ENCODE measurements at regions of chr10 and their contacts with region 1.

Region 1: DNA sequence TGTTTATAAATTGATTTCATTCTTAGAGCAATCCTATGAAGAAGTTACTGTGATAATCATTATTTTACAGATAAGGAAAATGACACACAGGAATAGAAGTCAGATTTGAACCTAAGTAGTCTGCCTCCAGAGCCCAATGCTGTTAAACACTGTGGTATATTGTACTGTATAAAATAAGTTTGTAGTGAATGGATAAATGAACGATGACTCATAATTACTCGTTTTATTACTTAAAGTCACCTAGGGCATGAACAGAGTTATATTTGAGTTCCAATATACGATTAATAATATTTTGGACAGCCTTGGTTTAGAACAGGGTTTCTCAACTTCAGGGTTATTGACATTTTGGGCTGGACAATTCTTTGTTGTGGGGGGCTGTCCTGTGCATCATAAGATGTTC is 7.8 kb upstream of the BTRC start:
- DNase-seq: no peak
- H3K4me3 ChIP-seq: no peak overlapping the region
- H3K27ac ChIP-seq: no peak overlapping the region
- H3K4me1 ChIP-seq: no peaks in the 10 kb centered on the region
- H3K27me3 ChIP-seq: no peaks in the 10 kb centered on the region
- CTCF ChIP-seq: no peak

Region 2: GRCh38 chr10:101118626-101119025 is 227.6 kb before region 1 on chr10:
- intact Hi-C with region 1: no loop called
- DNase-seq: no peak
- H3K4me3 ChIP-seq: no peak overlapping the region
- H3K27ac ChIP-seq: no peak overlapping the region
- H3K4me1 ChIP-seq: peaks cover 14% of the 10 kb centered on the region
- H3K27me3 ChIP-seq: peaks cover 20% of the 10 kb centered on the region
- CTCF ChIP-seq: no peak

Region 3: DNA sequence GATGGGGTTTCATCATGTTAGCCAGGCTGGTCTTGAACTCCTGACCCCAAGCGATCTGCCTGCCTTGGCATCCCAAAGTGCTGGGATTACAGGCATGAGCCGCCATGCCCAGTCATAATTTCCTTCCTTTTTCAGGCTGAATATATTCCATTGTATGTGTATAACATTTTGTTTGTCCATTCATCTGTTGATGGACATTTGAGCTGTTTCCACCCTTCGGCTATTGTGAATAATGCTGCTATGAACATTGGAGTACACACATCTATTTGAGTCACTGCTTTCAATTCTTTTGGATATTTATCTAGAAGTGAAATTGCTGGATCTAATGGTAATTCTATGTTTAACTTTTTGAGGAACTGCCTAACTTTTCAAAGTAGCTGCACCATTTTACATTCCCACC is 180.4 kb before region 1 on chr10:
- intact Hi-C with region 1: loop called (anchors 5 kb)
- DNase-seq: no peak
- H3K4me3 ChIP-seq: no peak overlapping the region
- H3K27ac ChIP-seq: no peak overlapping the region
- H3K4me1 ChIP-seq: no peaks in the 10 kb centered on the region
- H3K27me3 ChIP-seq: peaks cover 14% of the 10 kb centered on the region
- CTCF ChIP-seq: no peak

Region 4: GRCh38 chr10:101297901-101298486 is 48.2 kb before region 1 on chr10:
- intact Hi-C with region 1: no loop called
- DNase-seq: peak; percentile 62
- H3K4me3 ChIP-seq: no peak overlapping the region
- H3K27ac ChIP-seq: no peak overlapping the region
- H3K4me1 ChIP-seq: no peaks in the 10 kb centered on the region
- H3K27me3 ChIP-seq: peaks cover 9% of the 10 kb centered on the region
- CTCF ChIP-seq: peak; percentile 89

Region 5: GRCh38 chr10:101529725-101530553 is 183.8 kb after region 1 on chr10:
- intact Hi-C with region 1: no loop called
- DNase-seq: no peak
- H3K4me3 ChIP-seq: no peak overlapping the region
- H3K27ac ChIP-seq: no peak overlapping the region
- H3K4me1 ChIP-seq: no peaks in the 10 kb centered on the region
- H3K27me3 ChIP-seq: no peaks in the 10 kb centered on the region
- CTCF ChIP-seq: no peak

Measured in colonic mucosa (tissue), 4 donors.